Calu3 (cell line): ENCODE measurements at regions of chr5 and their contacts with region 1.

Region 1: GRCh38 chr5:141889282-141889871 is 11.2 kb upstream of the PCDH1 start:
- DNase-seq: no peak
- H3K4me3 Mint-ChIP-seq: no peak overlapping the region
- H3K27ac Mint-ChIP-seq: no peak overlapping the region
- H3K4me1 Mint-ChIP-seq: no peaks in the 10 kb centered on the region
- H3K27me3 Mint-ChIP-seq: peaks cover 24% of the 10 kb centered on the region
- CTCF ChIP-seq: no peak

Region 2: DNA sequence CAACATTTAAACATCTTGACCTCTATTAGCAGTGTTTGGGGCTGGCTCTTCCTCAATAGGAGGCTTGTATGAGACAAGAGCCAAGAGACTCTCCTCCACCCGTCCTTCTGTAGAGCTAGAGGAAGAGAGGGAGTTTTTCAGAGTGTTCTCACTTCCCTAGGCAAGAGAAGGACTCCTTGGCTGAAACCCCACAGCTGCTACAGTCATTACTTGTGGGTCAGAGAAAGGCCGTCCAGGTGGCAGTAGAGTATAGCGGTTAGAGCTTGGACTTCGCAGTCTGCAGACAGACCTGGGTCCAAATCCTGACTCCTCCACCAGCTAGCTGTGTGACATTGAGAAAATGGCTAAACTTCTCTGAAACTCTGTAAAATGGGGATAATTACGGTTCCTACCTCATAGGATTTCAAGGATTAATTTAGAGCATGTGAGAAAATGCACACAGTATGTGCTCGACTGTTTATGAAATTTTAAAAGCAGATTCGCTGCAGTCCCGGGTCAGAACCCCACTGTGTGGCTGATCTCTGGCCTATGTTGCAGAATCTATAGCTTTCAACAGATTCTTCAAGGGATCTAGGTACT is 126.5 kb before region 1 on chr5:
- CTCF ChIA-PET with region 1: interaction called, 12 read pairs
- intact Hi-C with region 1: no loop called
- DNase-seq: no peak
- H3K4me3 Mint-ChIP-seq: no peak overlapping the region
- H3K27ac Mint-ChIP-seq: no peak overlapping the region
- H3K4me1 Mint-ChIP-seq: peaks cover 8% of the 10 kb centered on the region
- H3K27me3 Mint-ChIP-seq: peaks cover 49% of the 10 kb centered on the region
- CTCF ChIP-seq: no peak

Region 3: DNA sequence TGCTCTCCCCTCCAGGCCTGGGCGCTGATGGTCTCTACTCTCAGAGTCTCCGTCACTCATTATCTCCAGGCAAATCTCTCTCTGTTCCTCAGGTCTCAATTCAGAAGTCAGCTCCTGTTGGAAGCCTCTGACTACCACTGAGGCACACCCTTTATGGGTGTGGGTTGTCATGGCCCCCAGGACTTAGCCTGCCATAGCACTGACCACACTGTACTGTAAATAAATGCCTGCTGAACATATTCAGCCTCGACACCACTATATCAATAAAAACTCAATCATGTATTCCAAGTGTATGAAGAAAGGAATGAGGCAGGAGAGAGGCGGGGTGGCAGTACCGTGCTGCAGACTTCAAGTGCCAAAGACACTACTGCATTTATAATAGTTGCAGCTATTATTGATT is 100.0 kb before region 1 on chr5:
- CTCF ChIA-PET with region 1: no interaction called
- intact Hi-C with region 1: no loop called
- DNase-seq: no peak
- H3K4me3 Mint-ChIP-seq: no peak overlapping the region
- H3K27ac Mint-ChIP-seq: no peak overlapping the region
- H3K4me1 Mint-ChIP-seq: peaks cover 14% of the 10 kb centered on the region
- H3K27me3 Mint-ChIP-seq: peaks cover 32% of the 10 kb centered on the region
- CTCF ChIP-seq: no peak

Region 4: DNA sequence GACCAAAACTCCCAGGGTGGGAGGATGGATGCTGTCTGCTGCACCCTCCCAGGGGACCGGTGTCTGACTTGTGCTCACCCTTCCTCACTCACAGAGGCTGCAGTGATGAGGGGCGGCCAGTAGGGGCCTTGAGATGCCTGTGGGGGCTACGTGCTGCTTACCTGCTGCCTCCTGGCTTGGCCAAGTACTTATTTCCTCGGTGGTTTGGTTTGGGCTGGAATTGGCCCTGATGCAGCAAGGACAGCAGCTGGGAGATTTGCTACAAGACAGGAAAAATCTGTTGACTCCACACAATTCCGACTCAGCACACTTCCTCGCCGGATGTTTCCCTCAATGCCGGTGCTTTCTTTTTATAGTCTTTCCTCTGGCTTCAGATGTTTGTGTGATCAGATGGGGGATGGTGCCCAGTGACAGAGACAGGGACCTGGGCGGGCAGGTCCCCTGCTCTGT is 62.0 kb after region 1 on chr5:
- CTCF ChIA-PET with region 1: interaction called, 14 read pairs
- intact Hi-C with region 1: no loop called
- DNase-seq: peak; percentile 47
- H3K4me3 Mint-ChIP-seq: no peak overlapping the region
- H3K27ac Mint-ChIP-seq: no peak overlapping the region
- H3K4me1 Mint-ChIP-seq: no peaks in the 10 kb centered on the region
- H3K27me3 Mint-ChIP-seq: peaks cover 19% of the 10 kb centered on the region
- CTCF ChIP-seq: peak; percentile 58